Activated CD8-positive, alpha-beta memory T cell treated with anti-CD3 and anti-CD28 coated beads, Interleukin-2, amount 10 ng/mL, durations not matched to agents 7 days and 5 days (primary cell): ENCODE measurements at regions of chr11 and their contacts with region 1.

Region 1: GRCh38 chr11:78645226-78646202 is 70.8 kb upstream of the NARS2 start:
- DNase-seq: peak; percentile 81
- ATAC-seq: peak; percentile 91
- H3K4me3 Mint-ChIP-seq: peak overlapping the region; percentile 22
- H3K27ac Mint-ChIP-seq: peak overlapping the region; percentile 75
- H3K4me1 Mint-ChIP-seq: peaks cover 17% of the 10 kb centered on the region
- H3K27me3 Mint-ChIP-seq: peaks cover 4% of the 10 kb centered on the region

Region 2: GRCh38 chr11:78715639-78716311 is 70.3 kb after region 1 on chr11:
- CTCF ChIA-PET with region 1: interaction called, 48 read pairs
- DNase-seq: peak; percentile 62
- ATAC-seq: no peak
- H3K4me3 Mint-ChIP-seq: no peak overlapping the region
- H3K27ac Mint-ChIP-seq: no peak overlapping the region
- H3K4me1 Mint-ChIP-seq: no peaks in the 10 kb centered on the region
- H3K27me3 Mint-ChIP-seq: peaks cover 8% of the 10 kb centered on the region

Region 3: GRCh38 chr11:78759071-78759470 is 113.6 kb after region 1 on chr11:
- CTCF ChIA-PET with region 1: no interaction called
- DNase-seq: no peak
- ATAC-seq: no peak
- H3K4me3 Mint-ChIP-seq: no peak overlapping the region
- H3K27ac Mint-ChIP-seq: no peak overlapping the region
- H3K4me1 Mint-ChIP-seq: no peaks in the 10 kb centered on the region
- H3K27me3 Mint-ChIP-seq: no peaks in the 10 kb centered on the region

Region 4: GRCh38 chr11:79076526-79077115 is 431.1 kb after region 1 on chr11:
- CTCF ChIA-PET with region 1: interaction called, 16 read pairs
- DNase-seq: peak; percentile 43
- ATAC-seq: no peak
- H3K4me3 Mint-ChIP-seq: no peak overlapping the region
- H3K27ac Mint-ChIP-seq: no peak overlapping the region
- H3K4me1 Mint-ChIP-seq: no peaks in the 10 kb centered on the region
- H3K27me3 Mint-ChIP-seq: no peaks in the 10 kb centered on the region

Region 5: GRCh38 chr11:79100093-79100910 is 454.8 kb after region 1 on chr11:
- CTCF ChIA-PET with region 1: interaction called, 30 read pairs
- DNase-seq: peak; percentile 52
- ATAC-seq: peak; percentile 68
- H3K4me3 Mint-ChIP-seq: no peak overlapping the region
- H3K27ac Mint-ChIP-seq: no peak overlapping the region
- H3K4me1 Mint-ChIP-seq: no peaks in the 10 kb centered on the region
- H3K27me3 Mint-ChIP-seq: peaks cover 3% of the 10 kb centered on the region